Activated T-helper 2 cell treated with anti-CD3 and anti-CD28 coated beads, Interferon-gamma antibody, Interleukin-2, Interleukin-4, amounts not matched to agents 10 μg/mL and 5 μg/mL and 100 μg/mL, durations not matched to agents 14 hours and 24 hours and 36 hours (primary cell): ENCODE measurements at regions of chr2 and their contacts with region 1.

Region 1: DNA sequence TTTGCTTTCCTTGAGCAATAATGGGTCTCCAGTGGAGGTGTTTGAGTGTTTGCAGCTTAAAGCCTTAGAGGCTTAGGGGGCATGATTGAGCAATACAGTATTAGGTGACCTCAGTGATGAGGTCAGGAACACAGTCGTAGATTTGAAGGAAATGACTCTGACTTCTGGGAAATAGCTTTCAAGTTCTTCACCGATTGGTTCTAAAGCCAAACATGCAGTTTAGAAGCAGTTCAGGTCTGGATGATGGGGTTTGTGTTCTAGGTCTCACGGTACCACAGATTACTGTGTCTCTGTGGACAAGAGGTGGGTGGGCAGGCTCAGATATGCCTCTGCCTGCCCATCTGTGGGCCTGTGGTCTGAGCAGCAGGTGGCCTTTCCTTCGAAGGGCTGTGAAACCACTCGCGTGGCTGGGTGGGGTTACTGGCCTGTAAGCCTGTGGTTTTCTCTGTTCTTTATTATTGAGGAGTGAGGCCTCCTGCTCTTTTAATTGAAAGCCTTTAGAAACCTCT is 7.8 kb downstream of the MTHFD2 start:
- DNase-seq: peak; percentile 48
- H3K4me3 Mint-ChIP-seq: peak overlapping the region; percentile 79
- H3K27ac Mint-ChIP-seq: peak overlapping the region; percentile 98
- H3K4me1 Mint-ChIP-seq: peaks cover 57% of the 10 kb centered on the region
- H3K27me3 Mint-ChIP-seq: no peaks in the 10 kb centered on the region

Region 2: DNA sequence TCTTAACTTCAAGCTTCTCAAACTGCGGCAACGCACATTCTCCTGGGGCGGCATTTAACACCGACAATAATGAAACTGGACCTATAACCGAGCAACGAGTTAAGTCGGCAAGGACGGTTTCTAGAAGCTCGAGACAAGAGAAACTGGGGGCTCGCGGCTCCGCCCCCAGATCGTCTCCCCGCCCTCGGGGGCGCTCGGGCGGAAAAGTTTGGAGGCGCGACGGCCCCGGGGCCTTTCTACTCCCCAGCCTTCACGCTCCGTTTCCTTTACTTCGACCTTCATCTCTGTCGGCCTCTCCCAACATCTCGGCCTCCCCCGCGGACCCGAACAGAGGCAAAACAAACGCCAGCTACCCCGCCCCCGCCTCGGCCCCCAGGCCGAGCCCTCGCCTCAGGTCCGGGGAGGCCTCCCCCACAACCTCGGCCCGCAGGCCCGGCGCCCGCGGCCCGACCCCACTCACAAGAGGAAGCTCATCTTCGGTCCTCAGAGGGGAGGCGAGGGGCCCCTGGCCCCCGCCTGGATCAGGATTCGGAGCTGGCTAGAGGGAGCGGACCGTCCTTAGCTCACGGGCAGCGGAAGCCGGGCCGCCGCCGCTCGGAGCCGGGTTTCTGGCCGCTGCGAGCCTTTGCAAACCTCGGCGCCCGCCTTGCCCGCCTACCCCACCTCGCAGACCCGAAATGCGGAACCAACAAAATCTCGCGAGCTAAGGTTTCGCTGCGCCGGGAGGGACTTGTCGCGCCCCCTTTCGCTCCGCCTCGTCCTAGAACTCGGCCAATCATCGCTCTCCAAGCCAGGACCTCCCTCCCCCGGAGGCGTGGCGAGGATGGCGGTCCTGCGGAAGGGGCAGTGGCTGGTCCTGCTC is 27.8 kb before region 1 on chr2 and contains the start of gene MOB1A:
- intact Hi-C with region 1: loop called (anchors 1 kb)
- DNase-seq: peak; percentile 97
- H3K4me3 Mint-ChIP-seq: peak within 1 kb of the TSS; percentile 85
- H3K27ac Mint-ChIP-seq: peak within 1 kb of the TSS; percentile 81
- H3K4me1 Mint-ChIP-seq: peaks cover 40% of the 10 kb centered on the region
- H3K27me3 Mint-ChIP-seq: no peaks in the 10 kb centered on the region
- total RNA-seq, gene MOB1A: 208 and 215 TPM in 2 replicates

Region 3: DNA sequence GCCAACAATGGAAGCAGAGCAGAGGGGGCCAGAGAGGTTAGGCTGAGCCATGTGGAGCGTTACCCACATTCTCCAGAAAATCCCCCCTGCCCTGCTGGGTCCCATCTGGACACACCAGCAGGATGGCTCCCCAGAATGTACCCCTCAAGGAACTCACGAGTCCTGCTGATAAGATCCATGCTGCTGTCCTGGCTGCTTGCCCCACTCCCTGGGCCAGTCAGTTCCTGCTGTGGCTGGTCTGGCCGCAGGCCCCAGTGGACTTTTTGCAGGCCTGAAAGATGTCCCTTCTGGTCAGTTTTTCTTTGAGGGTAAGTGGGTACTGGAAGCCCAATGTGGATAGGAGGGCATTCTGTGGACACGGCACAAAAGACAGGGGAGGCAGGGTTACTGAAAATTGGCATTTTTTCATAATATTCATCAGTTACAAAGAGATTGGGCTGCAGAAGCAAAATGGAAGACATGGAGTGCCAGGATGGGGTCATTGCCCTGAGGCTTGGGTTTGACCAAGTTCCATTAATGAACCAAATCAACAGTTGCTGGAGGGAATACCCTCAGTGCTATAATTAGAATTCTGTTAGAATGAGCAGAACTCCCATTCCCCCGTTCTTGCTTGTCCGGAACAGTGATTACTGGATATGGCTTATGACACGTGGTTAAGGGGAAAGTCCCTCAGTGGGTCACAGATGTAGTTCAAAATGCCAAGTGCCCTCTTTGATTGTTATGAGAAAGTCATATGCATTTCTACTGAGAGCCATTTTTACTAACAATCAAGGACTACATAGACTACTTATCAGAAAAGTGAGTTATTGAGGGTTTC is 98.3 kb after region 1 on chr2:
- intact Hi-C with region 1: no loop called
- DNase-seq: no peak
- H3K4me3 Mint-ChIP-seq: no peak overlapping the region
- H3K27ac Mint-ChIP-seq: no peak overlapping the region
- H3K4me1 Mint-ChIP-seq: no peaks in the 10 kb centered on the region
- H3K27me3 Mint-ChIP-seq: peaks cover 2% of the 10 kb centered on the region